Posterior vena cava (tissue), 2 donors: ENCODE measurements at regions of chr15 and their contacts with region 1.

Region 1: DNA sequence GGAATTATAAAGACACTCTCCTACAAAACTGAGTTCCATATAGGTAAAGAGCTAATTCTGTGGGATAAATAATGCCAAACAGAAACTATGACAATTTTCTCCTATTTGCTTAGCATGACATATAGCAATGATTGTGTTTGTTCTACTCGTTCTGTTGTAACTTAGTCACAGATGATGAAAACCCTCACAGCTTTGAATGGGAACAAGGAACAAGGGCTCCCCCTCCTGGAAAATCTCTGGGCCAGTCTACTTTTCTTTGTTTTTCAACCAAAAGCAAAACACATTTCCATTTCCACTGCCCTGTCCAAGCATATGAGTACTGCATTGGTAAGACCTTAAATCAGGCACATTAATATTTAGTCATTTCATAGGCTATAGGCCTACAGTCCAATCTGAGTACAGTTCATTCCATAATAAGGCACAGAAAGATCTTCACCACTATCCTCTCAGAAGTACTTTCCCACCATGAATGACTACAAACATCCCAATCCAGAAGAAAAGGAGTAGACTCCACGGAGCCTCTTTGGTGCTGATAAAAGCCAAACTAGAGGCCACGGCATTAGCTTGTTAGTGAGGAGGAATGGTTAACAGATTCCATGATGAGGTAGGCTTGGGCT is 67.1 kb downstream of the ATP8B4 start:
- DNase-seq: no peak

Region 2: DNA sequence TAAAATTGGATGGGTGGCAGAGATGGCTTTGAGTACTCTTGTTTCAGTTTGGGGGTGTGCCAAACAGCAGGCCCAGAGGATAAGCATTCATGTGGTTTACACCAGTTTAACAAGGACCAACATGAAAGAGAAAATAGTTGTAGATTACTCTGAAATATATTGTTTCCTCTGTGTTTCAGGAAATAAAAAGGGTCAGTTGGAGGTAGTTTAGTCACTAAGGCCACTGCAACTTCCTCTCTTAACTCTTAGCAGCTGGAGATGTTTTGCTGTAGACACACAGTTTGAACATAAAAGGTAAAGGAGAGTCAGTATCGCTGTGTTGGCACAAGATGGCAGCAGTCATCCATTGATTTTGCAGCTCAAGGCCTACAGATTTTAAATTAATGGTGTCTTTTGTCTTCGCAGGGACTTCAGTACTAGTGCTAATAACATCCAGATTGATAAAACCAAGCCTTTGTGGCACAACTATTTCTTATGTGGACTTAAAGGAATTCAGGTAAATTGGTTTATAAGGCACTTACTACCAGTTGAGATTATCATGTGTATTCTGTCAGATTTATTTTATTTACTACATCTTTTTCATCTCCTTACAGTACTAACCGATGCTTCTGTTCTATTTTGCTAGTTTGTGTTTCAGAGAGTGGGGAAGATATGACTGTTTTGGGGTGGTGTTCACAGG is 816.3 kb before region 1 on chr15:
- intact Hi-C with region 1: loop called in 1 of 2 experiments (anchors 5 kb)
- DNase-seq: no peak

Region 3: GRCh38 chr15:49421991-49422390 is 629.9 kb before region 1 on chr15:
- intact Hi-C with region 1: loop called in 1 of 2 experiments (anchors 10 kb)
- DNase-seq: peak; percentile 76

Region 4: DNA sequence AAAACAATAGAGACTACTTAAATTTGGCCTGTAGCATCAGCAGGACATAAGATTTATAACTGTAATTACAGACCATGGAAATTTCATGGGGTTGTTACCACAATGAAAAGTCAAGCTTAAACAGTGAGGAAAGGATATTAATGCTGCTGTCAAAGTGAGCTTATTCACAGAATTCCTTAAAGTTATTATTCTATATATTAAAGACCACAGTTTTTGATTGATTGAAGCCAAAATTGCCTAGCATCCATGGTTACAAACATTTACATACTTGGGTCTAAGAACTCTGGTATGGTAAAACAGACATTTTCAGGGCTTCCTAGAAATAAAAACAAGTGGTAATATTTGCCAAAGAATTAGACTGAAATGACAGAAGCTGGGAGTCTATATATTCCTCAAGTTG is 181.4 kb before region 1 on chr15:
- intact Hi-C with region 1: loop called (anchors 5 to 10 kb)
- DNase-seq: no peak

Region 5: DNA sequence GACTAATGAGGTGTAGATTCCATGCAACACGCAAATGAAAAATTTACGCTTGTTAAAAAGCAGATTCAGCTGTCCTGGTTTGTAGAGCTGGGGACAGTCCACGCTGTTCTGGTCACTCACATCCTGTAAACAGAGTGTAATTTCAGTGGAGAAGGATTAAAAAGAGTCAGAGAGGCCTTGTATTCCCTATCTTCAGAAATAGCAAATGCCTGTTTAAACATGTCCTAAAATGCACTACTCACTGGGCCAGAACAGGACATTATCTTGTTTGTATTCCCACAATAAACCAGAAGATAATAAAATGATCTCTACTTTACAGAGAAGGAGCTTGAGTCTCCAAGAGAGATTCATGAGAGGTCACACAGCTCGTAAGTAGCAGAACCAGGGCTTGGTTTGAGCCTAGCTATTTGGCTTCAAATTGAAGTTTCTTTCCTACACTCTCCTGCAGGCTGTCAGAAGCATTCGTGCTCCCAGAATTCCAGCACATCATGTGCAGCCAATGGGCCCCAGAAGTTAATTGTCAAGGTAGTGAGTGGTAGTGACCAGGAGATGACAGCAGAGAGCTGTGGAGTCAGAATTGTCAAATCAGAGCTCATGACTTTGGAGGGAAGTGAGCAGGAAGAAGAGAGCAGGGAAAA is 175.4 kb before region 1 on chr15:
- intact Hi-C with region 1: loop called (anchors 5 to 10 kb)
- DNase-seq: no peak

Region 6: DNA sequence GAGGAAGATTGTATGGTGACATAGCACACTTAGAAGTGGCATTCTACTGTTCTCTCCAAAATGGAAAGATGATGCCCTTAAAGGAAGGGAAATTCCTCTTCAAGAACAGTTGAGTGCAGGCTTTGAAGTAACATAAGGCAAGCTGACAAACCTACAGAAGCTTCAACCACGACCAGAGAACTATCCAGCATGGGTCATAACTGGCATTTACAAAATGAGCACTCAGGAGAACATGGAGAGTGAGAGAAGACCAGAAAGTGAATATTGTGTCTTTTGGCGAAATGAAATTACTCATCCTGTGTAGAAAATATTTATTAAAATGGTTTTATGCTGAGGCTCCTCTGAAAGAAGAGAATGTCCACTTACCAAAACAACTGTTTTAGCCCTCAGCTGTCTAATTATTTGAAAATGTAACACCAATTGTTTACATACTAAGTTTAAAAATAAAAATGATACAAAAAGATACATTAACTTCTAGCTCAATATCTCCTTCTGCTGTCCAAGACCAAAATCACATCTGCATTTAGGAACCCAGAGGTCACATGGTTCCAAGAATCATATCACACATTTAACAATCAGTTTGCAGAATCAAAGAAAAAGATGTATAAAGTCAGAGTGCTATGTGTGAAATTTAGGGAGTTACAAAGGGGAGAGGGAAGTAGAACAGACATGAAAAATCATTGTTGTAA is 149.8 kb before region 1 on chr15:
- intact Hi-C with region 1: loop called (anchors 5 to 10 kb)
- DNase-seq: no peak

Region 7: GRCh38 chr15:50107591-50108408 is 55.9 kb after region 1 on chr15:
- intact Hi-C with region 1: no loop called
- DNase-seq: peak; percentile 73

Region 8: GRCh38 chr15:50134520-50135024 is 82.7 kb after region 1 on chr15:
- intact Hi-C with region 1: loop called in 1 of 2 experiments (anchors 10 kb)
- DNase-seq: no peak

Region 9: DNA sequence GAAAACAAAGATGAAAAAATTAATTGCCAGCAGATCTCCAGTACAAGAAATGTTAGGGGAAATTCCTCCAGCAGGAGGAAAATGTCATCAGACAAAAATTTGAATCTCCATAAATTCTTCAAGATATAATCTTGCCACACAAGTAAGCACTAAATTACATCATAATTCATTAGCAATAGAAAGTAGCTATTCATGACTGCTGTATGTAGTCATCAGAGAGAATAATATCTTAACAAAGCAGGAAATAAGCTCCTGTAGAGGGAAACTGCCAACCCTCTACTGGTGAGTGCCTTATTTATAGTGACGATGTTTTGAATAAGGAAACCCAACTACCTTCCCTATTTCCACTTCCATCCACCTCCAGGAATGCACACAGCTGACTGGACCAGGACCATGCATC is 114.3 kb after region 1 on chr15:
- intact Hi-C with region 1: no loop called
- DNase-seq: no peak